ENCODE measurements at regions of chr1 and their contacts with region 1.

Region 1: DNA sequence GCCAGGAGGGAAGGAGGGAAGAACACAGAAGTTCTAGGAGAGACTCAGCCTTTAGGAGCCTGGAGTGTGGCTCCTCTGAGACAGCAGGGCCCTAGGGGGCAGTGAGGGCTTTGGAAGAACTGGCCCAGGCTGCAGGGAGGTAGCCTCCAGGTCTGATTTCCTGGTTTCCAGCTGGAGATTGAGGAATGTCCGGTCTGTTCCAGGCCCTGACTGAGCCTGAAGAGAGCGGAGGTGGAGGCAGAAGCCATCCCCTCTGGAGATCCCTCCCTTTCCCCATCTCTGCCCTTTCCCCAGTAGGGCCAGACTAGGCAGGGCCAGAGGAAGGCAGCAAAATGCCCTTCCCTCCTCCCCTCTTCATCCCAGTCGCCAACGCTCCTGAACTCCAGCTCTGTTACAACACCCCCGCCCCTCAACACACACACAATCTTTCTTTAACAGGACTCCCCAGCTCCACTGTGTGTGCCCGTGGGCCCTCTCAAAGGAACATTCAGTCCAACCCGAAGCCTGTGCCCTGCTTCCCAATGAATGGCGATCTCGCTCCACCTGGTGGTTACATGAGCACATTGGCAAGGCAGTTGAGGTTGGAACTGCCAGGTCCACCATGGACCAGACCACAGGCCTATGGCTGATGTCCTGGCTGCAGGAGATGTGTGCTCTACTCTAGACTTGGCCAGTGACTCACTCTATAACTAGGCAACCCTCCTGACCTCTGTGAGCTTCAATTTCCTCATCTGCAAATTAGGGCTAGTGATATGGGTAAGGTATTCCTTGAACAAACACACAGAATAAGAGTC is 32.0 kb downstream of the MAP7D1 start:
- DNase-seq: peak; percentile 70 to 92 (median 76)
- ATAC-seq: peak; percentile 99
- H3K4me3 ChIP-seq: no peak overlapping the region
- H3K4me3 Mint-ChIP-seq: no peak overlapping the region
- H3K27ac ChIP-seq: peak overlapping the region in 1 of 2 donors; percentile 12
- H3K27ac Mint-ChIP-seq: peak overlapping the region; percentile 29
- H3K4me1 ChIP-seq: peaks cover 7% of the 10 kb centered on the region
- H3K4me1 Mint-ChIP-seq: peaks cover 10% of the 10 kb centered on the region
- H3K27me3 ChIP-seq: no peaks in the 10 kb centered on the region
- H3K27me3 Mint-ChIP-seq: no peaks in the 10 kb centered on the region
- CTCF ChIP-seq: peak; percentile 84

Region 2: DNA sequence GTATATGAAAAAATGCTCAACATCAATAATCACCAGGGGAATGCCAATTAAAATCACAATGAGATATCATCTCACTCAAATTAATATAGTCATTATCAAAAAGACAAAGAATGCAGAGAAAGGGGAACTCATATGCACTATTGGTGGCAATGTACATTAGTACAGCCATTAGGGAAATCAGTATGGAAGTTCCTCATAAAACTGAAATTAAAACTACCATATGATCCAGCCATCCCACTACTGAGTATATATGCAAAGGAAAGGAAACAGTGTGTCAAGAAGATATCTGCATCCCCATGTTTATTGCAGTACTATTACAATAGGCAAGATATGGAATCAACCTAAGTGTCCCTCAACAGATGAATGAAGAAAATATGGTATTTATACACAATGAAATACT is 136.2 kb before region 1 on chr1:
- CTCF ChIA-PET with region 1: no interaction called
- POLR2A ChIA-PET with region 1: no interaction called
- intact Hi-C with region 1: no loop called
- DNase-seq: no peak
- ATAC-seq: no peak
- H3K4me3 ChIP-seq: no peak overlapping the region
- H3K4me3 Mint-ChIP-seq: no peak overlapping the region
- H3K27ac ChIP-seq: no peak overlapping the region
- H3K27ac Mint-ChIP-seq: no peak overlapping the region
- H3K4me1 ChIP-seq: no peaks in the 10 kb centered on the region
- H3K4me1 Mint-ChIP-seq: no peaks in the 10 kb centered on the region
- H3K27me3 ChIP-seq: no peaks in the 10 kb centered on the region
- H3K27me3 Mint-ChIP-seq: no peaks in the 10 kb centered on the region
- CTCF ChIP-seq: no peak

Region 3: DNA sequence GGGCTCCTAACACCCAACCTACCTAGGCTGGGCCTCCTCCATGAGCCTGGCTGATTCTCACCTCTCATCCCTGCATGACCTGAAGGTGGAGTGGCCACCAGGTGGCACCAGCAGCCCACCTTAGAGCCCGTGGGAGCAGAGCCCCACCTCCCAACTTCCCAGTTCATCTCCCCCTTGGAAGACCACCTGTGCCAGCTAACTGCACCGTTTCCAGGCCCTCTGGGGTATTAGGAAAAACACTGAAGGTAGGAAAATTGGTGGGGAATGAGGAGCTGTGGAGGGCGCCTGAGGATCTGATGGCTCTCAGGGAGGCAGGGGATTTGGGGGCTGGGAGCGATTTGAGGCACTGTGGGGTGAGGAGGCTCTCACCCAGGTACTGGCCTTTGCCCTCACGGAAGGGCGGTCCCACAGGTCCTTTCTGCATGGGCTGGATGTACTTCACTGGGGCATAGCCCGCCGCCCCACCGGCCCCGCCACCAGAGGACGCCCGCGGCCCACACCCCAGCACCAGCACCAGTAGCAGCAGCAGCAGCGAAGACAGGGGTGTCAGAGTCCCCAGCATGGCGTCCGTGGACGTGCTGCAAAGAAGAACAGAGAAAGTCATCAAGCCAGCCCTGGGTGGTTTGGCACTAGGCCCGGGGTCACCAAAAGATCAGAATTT is 88.2 kb before region 1 on chr1:
- CTCF ChIA-PET with region 1: interaction called, 3 read pairs
- POLR2A ChIA-PET with region 1: no interaction called
- intact Hi-C with region 1: loop called (anchors 1 kb)
- DNase-seq: peak; percentile 61 to 84 (median 71)
- ATAC-seq: peak; percentile 89
- H3K4me3 ChIP-seq: no peak overlapping the region
- H3K4me3 Mint-ChIP-seq: no peak overlapping the region
- H3K27ac ChIP-seq: no peak overlapping the region
- H3K27ac Mint-ChIP-seq: no peak overlapping the region
- H3K4me1 ChIP-seq: peaks cover 12% of the 10 kb centered on the region
- H3K4me1 Mint-ChIP-seq: no peaks in the 10 kb centered on the region
- H3K27me3 ChIP-seq: no peaks in the 10 kb centered on the region
- H3K27me3 Mint-ChIP-seq: no peaks in the 10 kb centered on the region
- CTCF ChIP-seq: peak; percentile 91

Region 4: GRCh38 chr1:36123356-36123755 is 64.6 kb before region 1 on chr1:
- CTCF ChIA-PET with region 1: no interaction called
- POLR2A ChIA-PET with region 1: no interaction called
- intact Hi-C with region 1: no loop called
- DNase-seq: peak in 3 of 14 experiments; percentile 32 to 68 (median 57)
- ATAC-seq: peak; percentile 53
- H3K4me3 ChIP-seq: no peak overlapping the region
- H3K4me3 Mint-ChIP-seq: peak overlapping the region; percentile 11
- H3K27ac ChIP-seq: no peak overlapping the region
- H3K27ac Mint-ChIP-seq: no peak overlapping the region
- H3K4me1 ChIP-seq: peaks cover 16% of the 10 kb centered on the region
- H3K4me1 Mint-ChIP-seq: peaks cover 27% of the 10 kb centered on the region
- H3K27me3 ChIP-seq: peaks cover 19 to 24% of the 10 kb centered on the region in 2 experiments
- H3K27me3 Mint-ChIP-seq: peaks cover 52% of the 10 kb centered on the region
- CTCF ChIP-seq: no peak

Region 5: DNA sequence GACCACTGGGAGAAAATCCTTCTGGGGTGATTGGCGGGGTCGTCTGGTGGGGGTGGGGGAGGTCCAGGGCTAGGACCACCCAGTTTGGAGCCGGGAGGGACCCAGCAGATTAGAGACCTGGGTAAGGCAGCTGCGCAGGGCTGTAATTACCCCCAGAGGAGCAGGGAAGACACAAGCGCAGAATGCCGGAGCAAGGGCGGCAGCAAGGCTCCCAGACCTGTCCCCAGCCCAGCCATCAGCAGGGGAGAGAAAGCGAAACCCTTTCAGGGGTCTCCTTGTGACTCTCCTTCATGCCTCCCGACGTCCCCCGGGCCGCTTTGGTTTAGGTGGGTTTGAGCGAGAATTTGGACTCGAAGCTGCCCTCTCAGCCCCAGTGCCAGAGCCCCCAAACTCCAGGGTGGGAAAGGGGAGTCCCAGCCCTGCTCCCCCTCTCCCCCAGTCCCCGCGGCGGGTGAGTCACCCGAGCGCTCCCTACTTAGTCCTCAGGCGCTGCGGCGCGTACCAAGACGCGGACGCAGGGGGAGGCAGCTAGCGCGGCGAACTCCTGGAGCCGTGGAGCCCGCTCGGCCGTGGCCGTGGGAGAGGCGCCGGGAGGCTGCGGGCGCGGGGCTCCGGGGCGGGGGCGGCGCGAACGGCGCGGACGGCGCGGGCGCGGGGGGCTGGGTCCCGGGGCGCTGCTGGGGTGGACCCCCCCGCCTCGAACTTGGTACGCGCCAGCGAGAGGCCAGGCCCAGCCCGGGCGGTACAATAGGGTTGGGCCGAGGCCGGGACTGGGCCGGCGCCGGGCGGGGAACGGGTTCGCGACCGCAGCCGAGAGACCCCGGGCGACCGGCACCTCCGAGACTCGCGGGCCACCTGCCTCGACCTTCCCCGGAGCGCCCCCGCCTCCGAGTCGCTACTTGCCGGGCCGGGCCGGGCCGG is 32.3 kb before region 1 on chr1 and contains the start of gene MAP7D1:
- CTCF ChIA-PET with region 1: interaction called, 114 read pairs
- POLR2A ChIA-PET with region 1: interaction called, 75 read pairs
- intact Hi-C with region 1: no loop called
- DNase-seq: peak; percentile 75 to 93 (median 84)
- ATAC-seq: peak; percentile 74
- H3K4me3 ChIP-seq: peak within 1 kb of the TSS; percentile 99
- H3K4me3 Mint-ChIP-seq: peak within 1 kb of the TSS; percentile 94
- H3K27ac ChIP-seq: peak within 1 kb of the TSS; percentile 86 to 96
- H3K27ac Mint-ChIP-seq: peak within 1 kb of the TSS; percentile 97
- H3K4me1 ChIP-seq: peaks cover 79% of the 10 kb centered on the region
- H3K4me1 Mint-ChIP-seq: peaks cover 76% of the 10 kb centered on the region
- H3K27me3 ChIP-seq: no peaks in the 10 kb centered on the region
- H3K27me3 Mint-ChIP-seq: no peaks in the 10 kb centered on the region
- CTCF ChIP-seq: no peak
- total RNA-seq, gene MAP7D1: 156 to 163 TPM

Region 6: GRCh38 chr1:36160949-36161485 is 27.0 kb before region 1 on chr1:
- CTCF ChIA-PET with region 1: interaction called, 26 read pairs
- POLR2A ChIA-PET with region 1: interaction called, 45 read pairs
- intact Hi-C with region 1: no loop called
- DNase-seq: peak; percentile 41 to 85 (median 64)
- ATAC-seq: peak; percentile 25
- H3K4me3 ChIP-seq: peak overlapping the region; percentile 61
- H3K4me3 Mint-ChIP-seq: peak overlapping the region; percentile 88
- H3K27ac ChIP-seq: peak overlapping the region; percentile 91 to 93
- H3K27ac Mint-ChIP-seq: peak overlapping the region; percentile 97
- H3K4me1 ChIP-seq: peaks cover 79% of the 10 kb centered on the region
- H3K4me1 Mint-ChIP-seq: peaks cover 72% of the 10 kb centered on the region
- H3K27me3 ChIP-seq: no peaks in the 10 kb centered on the region
- H3K27me3 Mint-ChIP-seq: no peaks in the 10 kb centered on the region
- CTCF ChIP-seq: no peak

Region 7: DNA sequence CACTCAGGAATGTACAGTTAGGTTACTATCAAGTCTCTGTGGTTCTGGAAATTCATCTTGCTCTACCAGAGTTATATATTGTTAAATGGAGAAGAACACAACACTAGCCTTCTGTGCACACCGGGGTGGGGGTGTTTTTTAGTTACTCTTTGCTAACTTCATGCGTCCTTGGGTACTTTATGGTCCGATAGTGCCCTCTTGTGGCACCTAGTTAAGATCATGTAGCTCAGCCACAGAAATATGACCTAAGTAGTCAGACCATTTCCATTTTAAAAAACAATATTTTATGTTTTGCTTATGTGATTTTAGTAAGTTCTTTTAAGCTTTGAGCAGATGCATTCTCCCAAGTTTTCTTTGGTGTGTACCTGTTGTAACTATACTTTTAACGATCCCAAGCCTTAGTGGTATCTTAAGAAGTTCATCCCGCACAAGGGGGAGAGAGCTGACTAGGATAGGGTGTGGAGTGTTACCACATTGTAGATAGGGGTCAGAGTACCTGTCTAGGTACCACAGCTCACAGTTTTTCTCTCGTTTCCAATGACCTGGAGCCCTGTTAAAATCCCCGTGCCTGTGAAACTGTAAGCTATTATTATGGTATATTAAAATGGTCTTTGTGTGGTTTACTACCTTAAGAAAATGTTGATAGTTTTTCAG is 97.6 kb after region 1 on chr1:
- CTCF ChIA-PET with region 1: interaction called, 18 read pairs
- POLR2A ChIA-PET with region 1: no interaction called
- intact Hi-C with region 1: loop called (anchors 1 to 2 kb)
- DNase-seq: peak; percentile 22 to 92 (median 50)
- ATAC-seq: peak; percentile 99
- H3K4me3 ChIP-seq: no peak overlapping the region
- H3K4me3 Mint-ChIP-seq: no peak overlapping the region
- H3K27ac ChIP-seq: no peak overlapping the region
- H3K27ac Mint-ChIP-seq: peak overlapping the region; percentile 34
- H3K4me1 ChIP-seq: no peaks in the 10 kb centered on the region
- H3K4me1 Mint-ChIP-seq: peaks cover 25% of the 10 kb centered on the region
- H3K27me3 ChIP-seq: no peaks in the 10 kb centered on the region
- H3K27me3 Mint-ChIP-seq: no peaks in the 10 kb centered on the region
- CTCF ChIP-seq: peak; percentile 83